ENCODE measurements at regions of chrX and their contacts with region 1.

Region 1: GRCh38 chrX:101931488-101932248 is at the start of gene ZMAT1:
- DNase-seq: peak; percentile 73 to 92 (median 87)
- ATAC-seq: peak; percentile 93
- H3K4me3 ChIP-seq: peak within 1 kb of the TSS; percentile 63
- H3K4me3 Mint-ChIP-seq: peak within 1 kb of the TSS; percentile 80 to 95 (median 88)
- H3K27ac ChIP-seq: peak within 1 kb of the TSS; percentile 89
- H3K27ac Mint-ChIP-seq: peak within 1 kb of the TSS; percentile 87 to 99 (median 96)
- H3K4me1 ChIP-seq: peaks cover 0 to 8% of the 10 kb centered on the region in 2 donors
- H3K4me1 Mint-ChIP-seq: peaks cover 8 to 44% (median 33%) of the 10 kb centered on the region in 7 donors
- H3K27me3 ChIP-seq: no peaks in the 10 kb centered on the region
- H3K27me3 Mint-ChIP-seq: no peaks in the 10 kb centered on the region
- total RNA-seq, gene ZMAT1: 3.0 to 48.3 (median 32.2) TPM

Region 2: DNA sequence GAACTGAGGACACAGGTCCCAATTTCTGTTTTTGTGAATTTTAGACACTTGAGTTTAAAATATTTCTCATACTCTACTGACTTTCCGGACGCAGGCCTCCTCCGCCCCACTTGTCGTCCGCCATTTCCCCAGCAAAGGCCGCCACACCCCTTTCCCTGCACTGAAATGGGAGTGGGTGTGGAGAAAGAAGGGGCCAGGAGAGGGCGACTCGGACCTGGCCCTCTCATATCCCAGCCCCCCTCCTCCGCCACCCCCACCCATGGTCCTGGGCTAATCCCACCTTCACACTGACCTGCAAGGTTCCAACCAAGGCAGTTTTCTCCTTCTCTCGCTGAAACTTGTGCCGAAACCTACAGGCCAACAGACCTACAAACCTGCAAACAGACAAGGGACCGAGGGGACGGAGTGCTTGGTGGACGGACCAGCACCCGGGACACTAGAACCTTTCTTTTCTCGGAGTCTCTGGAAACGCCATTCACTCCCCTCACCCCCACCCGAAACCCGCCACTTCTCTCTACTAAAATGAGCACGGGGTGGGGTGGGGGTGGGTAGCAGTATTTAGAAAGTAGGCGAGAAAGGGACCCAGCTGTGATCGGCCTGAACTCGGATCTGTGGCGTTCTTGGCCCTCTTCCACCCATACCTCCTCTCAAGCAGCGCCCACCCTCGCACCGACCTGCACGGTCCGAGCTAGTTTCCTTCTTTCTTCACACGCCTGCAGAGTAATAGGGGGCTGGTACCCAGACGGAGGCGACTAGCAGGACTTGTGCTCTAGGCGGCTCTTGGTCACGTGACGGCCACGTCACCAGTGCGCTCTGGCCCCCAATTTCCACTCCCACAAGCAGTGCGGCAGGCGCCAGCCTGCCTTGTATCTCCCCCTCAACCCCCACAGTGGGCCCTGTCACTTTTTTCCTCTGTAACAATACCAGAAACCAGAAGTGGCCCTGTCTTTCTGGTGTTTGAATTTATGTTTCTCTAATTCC is 314.2 kb before region 1 on chrX and contains the start of gene ARMCX6:
- CTCF ChIA-PET with region 1: no interaction called
- POLR2A ChIA-PET with region 1: interaction called, 3 read pairs
- intact Hi-C with region 1: loop called in 1 of 2 experiments (anchors 1 kb)
- DNase-seq: peak; percentile 39 to 80 (median 63)
- ATAC-seq: peak; percentile 92
- H3K4me3 ChIP-seq: peak within 1 kb of the TSS; percentile 77
- H3K4me3 Mint-ChIP-seq: peak within 1 kb of the TSS; percentile 89 to 97 (median 92)
- H3K27ac ChIP-seq: peak within 1 kb of the TSS; percentile 79
- H3K27ac Mint-ChIP-seq: peak within 1 kb of the TSS; percentile 71 to 97 (median 94)
- H3K4me1 ChIP-seq: peaks cover 4 to 9% of the 10 kb centered on the region in 2 donors
- H3K4me1 Mint-ChIP-seq: peaks cover 0 to 24% (median 15%) of the 10 kb centered on the region in 7 donors
- H3K27me3 ChIP-seq: no peaks in the 10 kb centered on the region
- H3K27me3 Mint-ChIP-seq: no peaks in the 10 kb centered on the region
- total RNA-seq, gene ARMCX6: 27.3 to 42.5 (median 39.9) TPM

Region 3: DNA sequence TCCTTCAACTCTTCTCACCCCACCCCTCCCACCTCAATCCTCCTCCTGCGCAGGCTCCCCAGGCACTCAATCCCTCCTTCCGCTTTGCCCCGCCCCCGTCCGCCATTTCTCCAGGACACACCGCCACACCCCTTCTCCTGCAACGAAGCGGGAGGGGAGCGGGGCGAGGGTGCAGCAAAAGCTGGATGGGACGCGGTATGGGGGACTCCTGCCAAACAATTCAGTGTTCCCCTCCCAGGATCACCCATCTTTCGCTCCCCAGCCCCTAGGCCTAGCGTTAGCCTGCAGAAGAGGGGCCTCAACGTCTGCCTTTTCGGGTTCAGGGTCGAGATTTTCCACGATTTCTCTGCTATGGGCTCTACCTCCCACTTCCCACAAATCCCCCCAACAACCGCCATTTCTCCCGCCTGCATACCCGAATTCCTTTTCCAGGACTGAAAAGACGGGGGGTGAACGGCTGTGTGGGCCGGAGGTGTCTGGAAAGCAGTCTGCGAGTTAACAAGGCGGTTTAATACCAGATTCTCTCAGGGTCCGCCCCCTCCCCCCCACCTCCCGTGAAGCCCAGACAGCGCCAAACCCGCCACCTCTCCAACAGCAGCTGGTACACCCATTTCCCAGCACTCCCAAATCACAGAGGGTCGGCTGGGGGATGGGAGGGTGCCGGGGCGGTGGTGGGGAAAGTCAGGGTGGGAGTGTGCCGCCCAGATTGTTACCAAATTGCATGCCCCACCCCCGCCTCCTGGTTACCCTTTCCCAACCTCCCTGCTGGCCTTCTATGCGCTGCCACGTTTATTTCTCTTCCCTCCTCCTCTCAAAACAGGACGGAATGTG is 272.8 kb before region 1 on chrX:
- CTCF ChIA-PET with region 1: no interaction called
- POLR2A ChIA-PET with region 1: interaction called, 3 read pairs
- intact Hi-C with region 1: loop called in 1 of 2 experiments (anchors 1 kb)
- DNase-seq: peak in 8 of 9 donors; percentile 50 to 70 (median 52)
- ATAC-seq: peak; percentile 91
- H3K4me3 ChIP-seq: peak overlapping the region; percentile 61
- H3K4me3 Mint-ChIP-seq: peak overlapping the region; percentile 80 to 91 (median 88)
- H3K27ac ChIP-seq: peak overlapping the region; percentile 73
- H3K27ac Mint-ChIP-seq: peak overlapping the region; percentile 49 to 90 (median 85)
- H3K4me1 ChIP-seq: no peaks in the 10 kb centered on the region
- H3K4me1 Mint-ChIP-seq: peaks cover 8 to 26% (median 14%) of the 10 kb centered on the region in 7 donors
- H3K27me3 ChIP-seq: no peaks in the 10 kb centered on the region
- H3K27me3 Mint-ChIP-seq: peaks cover 0 to 9% (median 0%) of the 10 kb centered on the region in 5 donors

Region 4: DNA sequence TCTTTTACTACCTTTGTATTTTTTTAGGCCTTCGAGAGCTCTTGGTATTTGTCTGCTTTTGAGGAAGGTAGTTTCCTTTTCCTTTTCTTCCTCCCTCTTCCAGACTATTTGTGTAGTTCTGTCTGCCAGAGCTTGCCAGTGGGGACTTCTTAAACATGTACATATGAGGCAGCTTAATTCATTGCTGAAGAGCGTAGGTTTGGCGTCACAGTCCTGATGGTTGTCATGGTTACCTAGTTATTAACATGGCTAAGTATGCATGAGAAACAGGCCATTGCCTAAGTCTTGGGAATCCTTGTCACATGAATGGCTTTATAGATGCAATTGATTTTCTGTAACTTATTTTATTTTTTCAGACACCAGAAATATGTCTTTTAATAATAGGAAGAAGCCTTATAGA is 223.5 kb before region 1 on chrX:
- CTCF ChIA-PET with region 1: no interaction called
- POLR2A ChIA-PET with region 1: no interaction called
- intact Hi-C with region 1: no loop called
- DNase-seq: no peak
- ATAC-seq: no peak
- H3K4me3 ChIP-seq: no peak overlapping the region
- H3K4me3 Mint-ChIP-seq: no peak overlapping the region
- H3K27ac ChIP-seq: no peak overlapping the region
- H3K27ac Mint-ChIP-seq: peak overlapping the region in 1 of 9 donors; percentile 19
- H3K4me1 ChIP-seq: no peaks in the 10 kb centered on the region
- H3K4me1 Mint-ChIP-seq: no peaks in the 10 kb centered on the region
- H3K27me3 ChIP-seq: no peaks in the 10 kb centered on the region
- H3K27me3 Mint-ChIP-seq: no peaks in the 10 kb centered on the region